Mammary epithelial cell (primary cell): ENCODE measurements at regions of chr6 and their contacts with region 1.

Region 1: GRCh38 chr6:15245361-15246216 is at the start of gene JARID2:
- DNase-seq: peak; percentile 96
- H3K4me3 ChIP-seq: peak within 1 kb of the TSS; percentile 70 to 95 (median 82)
- H3K27ac ChIP-seq: peak within 1 kb of the TSS; percentile 86
- H3K4me1 ChIP-seq: peaks cover 20% of the 10 kb centered on the region
- H3K27me3 ChIP-seq: no peaks in the 10 kb centered on the region
- CTCF ChIP-seq: no peak
- total RNA-seq, gene JARID2: 10.3 to 25.8 TPM

Region 2: DNA sequence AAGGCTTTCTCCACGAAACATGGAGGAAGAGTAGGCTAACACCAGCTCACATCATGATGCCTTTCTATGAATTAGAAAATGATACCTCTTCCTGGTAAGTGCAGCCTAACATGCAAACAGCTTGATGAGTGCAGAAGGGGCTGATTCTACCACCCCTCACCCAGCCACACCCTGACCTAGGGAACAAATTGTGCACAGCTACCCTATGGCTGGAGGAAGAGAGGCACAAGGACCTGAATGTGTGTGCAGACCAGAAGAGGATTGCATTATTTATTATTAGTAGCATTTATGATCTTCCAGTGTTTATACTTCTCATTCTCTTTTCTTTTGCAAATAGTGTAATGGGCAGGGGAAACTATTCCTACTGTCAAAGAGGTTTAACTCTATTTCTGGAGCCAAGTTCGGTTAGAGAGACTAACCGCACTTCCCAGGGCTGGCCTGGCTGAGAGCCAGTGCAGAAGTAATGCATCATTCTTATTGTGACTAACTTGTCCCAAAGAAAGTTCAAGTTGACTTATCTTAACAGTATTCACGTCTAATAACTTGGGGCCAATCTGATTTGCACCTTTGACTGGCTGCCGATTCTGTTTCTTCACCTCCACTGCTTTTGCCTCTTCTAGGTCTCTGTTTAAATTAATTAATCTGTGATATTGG is 890.5 kb before region 1 on chr6:
- CTCF ChIA-PET with region 1: no interaction called
- dilution Hi-C with region 1: no loop called
- in situ Hi-C with region 1: no loop called
- intact Hi-C with region 1: loop called (anchors 10 kb)
- DNase-seq: peak; percentile 80
- H3K4me3 ChIP-seq: no peak overlapping the region
- H3K27ac ChIP-seq: no peak overlapping the region
- H3K4me1 ChIP-seq: peaks cover 20% of the 10 kb centered on the region
- H3K27me3 ChIP-seq: peaks cover 5% of the 10 kb centered on the region
- CTCF ChIP-seq: no peak

Region 3: GRCh38 chr6:14734416-14735340 is 510.9 kb before region 1 on chr6:
- CTCF ChIA-PET with region 1: no interaction called
- dilution Hi-C with region 1: no loop called
- in situ Hi-C with region 1: loop called in 1 of 2 experiments (anchors 25 kb)
- intact Hi-C with region 1: loop called (anchors 1 kb)
- DNase-seq: peak; percentile 67
- H3K4me3 ChIP-seq: no peak overlapping the region
- H3K27ac ChIP-seq: peak overlapping the region; percentile 99
- H3K4me1 ChIP-seq: peaks cover 36% of the 10 kb centered on the region
- H3K27me3 ChIP-seq: no peaks in the 10 kb centered on the region
- CTCF ChIP-seq: no peak

Region 4: DNA sequence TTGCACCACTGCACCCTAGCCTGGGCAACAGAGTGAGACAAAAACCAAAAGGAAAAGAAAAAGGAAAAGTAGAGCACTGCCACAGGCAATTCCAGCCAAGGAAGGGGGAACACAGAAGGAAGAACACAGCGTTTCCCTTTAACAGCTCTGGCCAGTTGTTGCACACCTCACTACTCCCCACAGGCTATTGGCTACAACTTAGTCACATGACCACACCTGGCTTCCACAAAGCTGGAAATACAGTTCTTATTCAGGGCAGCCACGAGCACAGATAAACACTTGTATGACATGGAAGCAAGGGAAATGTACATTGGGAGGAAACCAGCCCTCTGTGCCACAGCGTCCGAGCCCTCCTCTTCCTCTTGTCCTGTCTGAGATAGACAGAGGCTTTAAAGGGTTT is 248.7 kb before region 1 on chr6:
- CTCF ChIA-PET with region 1: no interaction called
- dilution Hi-C with region 1: no loop called
- in situ Hi-C with region 1: no loop called
- intact Hi-C with region 1: loop called (anchors 10 kb)
- DNase-seq: no peak
- H3K4me3 ChIP-seq: no peak overlapping the region
- H3K27ac ChIP-seq: no peak overlapping the region
- H3K4me1 ChIP-seq: no peaks in the 10 kb centered on the region
- H3K27me3 ChIP-seq: no peaks in the 10 kb centered on the region
- CTCF ChIP-seq: no peak

Region 5: GRCh38 chr6:15327271-15327670 is 81.7 kb after region 1 on chr6:
- CTCF ChIA-PET with region 1: no interaction called
- dilution Hi-C with region 1: no loop called
- in situ Hi-C with region 1: no loop called
- intact Hi-C with region 1: loop called (anchors 5 kb)
- DNase-seq: no peak
- H3K4me3 ChIP-seq: no peak overlapping the region
- H3K27ac ChIP-seq: no peak overlapping the region
- H3K4me1 ChIP-seq: peaks cover 54% of the 10 kb centered on the region
- H3K27me3 ChIP-seq: no peaks in the 10 kb centered on the region
- CTCF ChIP-seq: peak in 1 of 2 donors; percentile 28

Region 6: GRCh38 chr6:15491255-15491985 is 245.8 kb after region 1 on chr6:
- CTCF ChIA-PET with region 1: no interaction called
- dilution Hi-C with region 1: no loop called
- in situ Hi-C with region 1: no loop called
- intact Hi-C with region 1: loop called (anchors 2 kb)
- DNase-seq: peak; percentile 29
- H3K4me3 ChIP-seq: no peak overlapping the region
- H3K27ac ChIP-seq: no peak overlapping the region
- H3K4me1 ChIP-seq: no peaks in the 10 kb centered on the region
- H3K27me3 ChIP-seq: no peaks in the 10 kb centered on the region
- CTCF ChIP-seq: peak; percentile 91 to 94